Thyroid gland (tissue), 4 donors: ENCODE measurements at regions of chr20 and their contacts with region 1.

Region 1: GRCh38 chr20:17898548-17898994 is 70.0 kb downstream of the SNX5 start:
- DNase-seq: peak; percentile 79 to 80
- H3K4me3 ChIP-seq: no peak overlapping the region
- H3K27ac ChIP-seq: no peak overlapping the region
- H3K4me1 ChIP-seq: peaks cover 0 to 12% of the 10 kb centered on the region in 2 donors
- H3K27me3 ChIP-seq: no peaks in the 10 kb centered on the region
- CTCF ChIP-seq: peak; percentile 87 to 97 (median 94)
- POLR2A ChIP-seq: no peak

Region 2: GRCh38 chr20:17682103-17682888 is 216.3 kb before region 1 on chr20 and contains the start of gene RRBP1:
- intact Hi-C with region 1: loop called (anchors 10 kb)
- DNase-seq: peak; percentile 99
- H3K4me3 ChIP-seq: peak within 1 kb of the TSS; percentile 76 to 81 (median 77)
- H3K27ac ChIP-seq: peak within 1 kb of the TSS; percentile 85 to 91 (median 87)
- H3K4me1 ChIP-seq: peaks cover 29 to 31% of the 10 kb centered on the region in 2 donors
- H3K27me3 ChIP-seq: no peaks in the 10 kb centered on the region
- CTCF ChIP-seq: peak in 4 of 6 experiments; percentile 52 to 58 (median 54)
- POLR2A ChIP-seq: peak; percentile 95 to 99
- total RNA-seq, gene RRBP1: 149 to 287 (median 221) TPM